Psoas muscle (tissue), 8 donors: ENCODE measurements at regions of chr1 and their contacts with region 1.

Region 1: DNA sequence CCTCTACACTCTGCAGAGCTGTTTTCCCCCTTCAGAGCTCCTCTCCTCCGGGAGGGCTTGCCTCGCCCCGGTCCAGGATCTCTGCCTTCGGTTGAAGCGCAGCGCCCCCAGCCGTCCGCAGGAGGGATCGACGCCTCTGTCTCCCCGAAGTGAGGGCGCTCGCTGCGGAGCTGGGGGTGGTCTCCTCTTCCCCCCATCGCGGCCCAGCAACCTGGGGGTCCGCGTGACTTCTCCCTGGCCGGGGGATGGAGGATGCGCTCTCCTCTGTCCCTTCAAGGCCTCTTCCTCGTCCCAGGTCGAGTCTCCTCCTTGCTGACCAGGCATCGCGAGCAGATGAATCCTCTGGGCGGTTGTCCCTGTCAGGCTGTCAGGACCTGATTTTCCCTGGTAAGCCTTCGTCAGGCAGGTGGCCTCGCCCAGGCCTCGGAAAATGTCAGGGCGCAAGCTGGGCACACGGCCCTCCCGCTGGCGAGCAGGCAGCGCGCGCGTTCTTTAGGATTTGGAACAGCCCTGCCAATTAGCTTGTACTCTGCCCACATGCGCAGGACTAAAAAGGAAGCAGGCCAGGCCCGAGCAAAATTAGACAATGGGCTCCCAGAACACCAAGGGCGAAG is 90.5 kb downstream of the EDEM3 start:
- DNase-seq: peak; percentile 77 to 90
- ATAC-seq: peak; percentile 88 to 93 (median 90)
- H3K4me3 ChIP-seq: peak overlapping the region; percentile 67
- H3K27ac ChIP-seq: peak overlapping the region; percentile 71
- H3K4me1 ChIP-seq: peaks cover 13% of the 10 kb centered on the region
- H3K27me3 ChIP-seq: no peaks in the 10 kb centered on the region
- CTCF ChIP-seq: peak; percentile 98

Region 2: GRCh38 chr1:184075055-184076029 is 588.8 kb before region 1 on chr1:
- intact Hi-C with region 1: loop called in 1 of 2 experiments (anchors 10 kb)
- DNase-seq: no peak
- ATAC-seq: peak; percentile 67 to 93 (median 77)
- H3K4me3 ChIP-seq: no peak overlapping the region
- H3K27ac ChIP-seq: peak overlapping the region; percentile 13
- H3K4me1 ChIP-seq: peaks cover 7% of the 10 kb centered on the region
- H3K27me3 ChIP-seq: no peaks in the 10 kb centered on the region
- CTCF ChIP-seq: peak; percentile 82

Region 3: DNA sequence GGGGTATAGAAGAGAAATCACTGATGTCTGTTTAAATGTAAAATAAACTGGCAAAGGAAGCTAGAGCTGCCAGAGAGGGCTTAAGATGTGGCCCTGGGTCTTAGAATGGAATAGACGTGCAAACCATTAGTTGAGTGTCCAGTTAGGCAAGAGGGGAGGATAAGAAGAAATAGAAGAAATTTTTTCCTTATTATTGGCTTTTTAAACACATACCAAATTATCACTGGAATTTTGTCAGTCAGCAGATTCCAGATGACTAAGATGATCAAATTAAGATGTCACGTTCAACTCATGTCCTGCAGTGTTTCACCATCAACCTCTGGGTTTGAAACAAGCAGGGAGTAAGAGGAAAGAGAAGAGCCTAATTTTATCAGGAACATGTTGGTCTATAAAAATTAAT is 348.9 kb before region 1 on chr1:
- intact Hi-C with region 1: loop called in 1 of 2 experiments (anchors 10 kb)
- DNase-seq: no peak
- ATAC-seq: no peak
- H3K4me3 ChIP-seq: no peak overlapping the region
- H3K27ac ChIP-seq: no peak overlapping the region
- H3K4me1 ChIP-seq: no peaks in the 10 kb centered on the region
- H3K27me3 ChIP-seq: no peaks in the 10 kb centered on the region
- CTCF ChIP-seq: no peak

Region 4: GRCh38 chr1:184386312-184387068 is 277.7 kb before region 1 on chr1 and contains the start of gene C1orf21:
- intact Hi-C with region 1: loop called in 1 of 2 experiments (anchors 10 kb)
- DNase-seq: peak; percentile 92 to 95
- ATAC-seq: peak; percentile 84 to 87 (median 86)
- H3K4me3 ChIP-seq: peak within 1 kb of the TSS; percentile 91
- H3K27ac ChIP-seq: peak within 1 kb of the TSS; percentile 96
- H3K4me1 ChIP-seq: peaks cover 29% of the 10 kb centered on the region
- H3K27me3 ChIP-seq: no peaks in the 10 kb centered on the region
- CTCF ChIP-seq: no peak
- total RNA-seq, gene C1orf21: 103 to 184 (median 149) TPM

Region 5: DNA sequence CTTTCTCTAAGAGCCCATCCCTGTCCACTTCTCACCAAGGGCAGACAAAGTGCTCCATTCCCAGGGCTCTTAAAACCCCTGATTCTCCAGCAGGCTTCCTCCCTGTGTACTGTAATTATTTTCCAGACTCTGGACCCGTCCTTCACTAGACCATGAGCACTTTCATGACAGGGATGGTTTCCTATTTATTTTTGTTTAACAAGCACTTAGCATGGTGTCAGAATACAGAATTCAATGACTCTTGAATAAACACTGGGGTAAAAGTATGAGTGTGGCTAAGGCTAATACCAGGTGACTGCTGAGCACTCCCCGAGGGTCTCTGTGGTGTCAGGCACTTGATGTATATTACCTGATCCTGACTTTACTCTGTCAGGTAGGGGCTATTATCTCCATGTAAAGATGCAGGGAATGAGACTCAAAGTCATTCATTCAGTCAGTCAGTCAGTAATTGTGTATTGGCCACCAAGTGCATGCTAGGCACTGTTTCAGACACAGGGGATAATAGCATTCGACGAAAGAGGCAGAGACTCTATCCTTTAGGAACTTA is 230.1 kb before region 1 on chr1:
- intact Hi-C with region 1: no loop called
- DNase-seq: no peak
- ATAC-seq: no peak
- H3K4me3 ChIP-seq: no peak overlapping the region
- H3K27ac ChIP-seq: no peak overlapping the region
- H3K4me1 ChIP-seq: peaks cover 7% of the 10 kb centered on the region
- H3K27me3 ChIP-seq: no peaks in the 10 kb centered on the region
- CTCF ChIP-seq: no peak

Region 6: DNA sequence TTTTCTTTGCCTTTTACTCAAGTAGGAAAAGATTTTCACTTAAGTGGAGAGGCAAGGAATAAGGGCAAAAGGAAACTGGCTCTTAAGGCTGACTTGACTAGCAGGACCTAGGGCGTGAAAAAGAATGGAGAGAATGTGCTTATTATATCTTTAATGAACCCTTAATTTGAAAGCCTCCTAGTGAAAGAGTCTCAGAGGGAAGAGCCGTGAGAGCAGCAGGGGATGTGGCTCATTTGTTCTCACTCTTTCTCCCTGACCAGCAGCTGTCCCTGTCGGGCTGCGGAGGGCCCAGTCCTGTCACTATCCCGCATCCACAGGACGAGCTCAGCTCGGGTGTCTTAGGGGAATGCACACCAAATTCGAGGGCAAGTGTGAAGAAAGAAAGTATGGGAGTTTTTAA is 89.6 kb before region 1 on chr1:
- intact Hi-C with region 1: loop called in 1 of 2 experiments (anchors 10 kb)
- DNase-seq: no peak
- ATAC-seq: peak in 2 of 4 donors; percentile 51 to 57
- H3K4me3 ChIP-seq: no peak overlapping the region
- H3K27ac ChIP-seq: peak overlapping the region; percentile 19
- H3K4me1 ChIP-seq: peaks cover 32% of the 10 kb centered on the region
- H3K27me3 ChIP-seq: no peaks in the 10 kb centered on the region
- CTCF ChIP-seq: no peak